Esophagus muscularis mucosa (tissue), 4 donors: ENCODE measurements at regions of chr10 and their contacts with region 1.

Region 1: DNA sequence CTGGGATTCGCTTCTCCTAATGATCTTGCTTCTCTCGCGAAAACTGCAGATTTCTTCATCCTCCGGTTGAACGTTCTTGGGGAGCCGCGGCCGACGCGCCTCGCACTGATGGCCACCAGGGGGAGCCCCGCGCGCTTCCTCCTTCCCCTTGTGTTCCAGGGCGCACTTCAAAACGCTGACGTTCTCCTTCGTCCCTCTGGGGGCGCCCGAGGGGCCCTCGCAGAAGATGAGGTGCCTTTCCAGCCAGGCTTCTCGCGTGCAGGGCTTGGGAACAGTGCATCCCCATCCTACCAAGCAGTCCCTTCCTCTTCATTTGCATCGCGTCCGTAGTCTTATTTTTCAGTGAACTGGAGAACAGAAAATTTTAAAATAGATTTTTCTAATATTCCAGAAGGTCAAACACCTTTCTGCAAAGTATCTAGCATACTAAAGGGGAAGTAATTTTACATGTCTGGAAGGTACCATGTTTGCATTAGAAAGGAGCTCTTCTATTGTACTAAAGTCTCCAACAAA is 22.5 kb downstream of the GSTO2 start:
- DNase-seq: peak; percentile 98
- H3K4me3 ChIP-seq: no peak overlapping the region
- H3K27ac ChIP-seq: no peak overlapping the region
- H3K4me1 ChIP-seq: peaks cover 9 to 32% (median 21%) of the 10 kb centered on the region in 4 donors
- H3K27me3 ChIP-seq: no peaks in the 10 kb centered on the region
- CTCF ChIP-seq: peak in 2 of 3 experiments; percentile 100
- EP300 ChIP-seq: no peak
- POLR2A ChIP-seq: no peak

Region 2: DNA sequence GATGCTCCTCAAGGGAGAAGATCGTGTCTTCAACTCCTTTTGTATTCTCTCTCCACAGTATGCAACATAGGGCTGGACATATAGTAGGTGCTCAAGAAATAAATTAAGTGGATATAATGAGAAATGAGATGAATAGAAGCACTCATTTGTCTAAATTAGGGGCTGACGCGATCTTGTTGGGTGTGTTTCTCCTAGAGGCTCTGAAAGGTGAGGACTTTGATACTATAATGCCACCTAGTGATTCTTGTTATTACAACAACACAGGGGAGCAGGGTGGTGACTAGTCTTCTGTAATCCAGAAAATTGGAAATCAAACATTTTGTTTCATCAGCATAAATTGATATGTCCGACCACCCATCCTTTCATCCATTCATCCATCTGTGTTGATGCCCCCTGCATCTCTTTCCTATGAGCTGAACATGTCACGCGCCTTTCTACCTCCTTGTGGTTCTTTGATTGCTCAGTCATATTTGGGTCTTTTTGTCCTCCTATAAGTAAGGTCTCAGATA is 58.7 kb after region 1 on chr10:
- intact Hi-C with region 1: loop called (anchors 1 kb)
- DNase-seq: no peak
- H3K4me3 ChIP-seq: peak overlapping the region; percentile 15 to 35 (median 25)
- H3K27ac ChIP-seq: peak overlapping the region; percentile 36 to 80 (median 77)
- H3K4me1 ChIP-seq: peaks cover 12 to 34% (median 34%) of the 10 kb centered on the region in 4 donors
- H3K27me3 ChIP-seq: no peaks in the 10 kb centered on the region
- CTCF ChIP-seq: peak; percentile 65 to 84 (median 75)
- EP300 ChIP-seq: no peak
- POLR2A ChIP-seq: no peak